ENCODE measurements at regions of chr16 and their contacts with region 1.

Region 1: GRCh38 chr16:11105038-11105903 is 150.7 kb downstream of the SOCS1 start:
- DNase-seq: peak; percentile 80 to 94 (median 85)
- ATAC-seq: peak; percentile 72
- H3K4me3 ChIP-seq: no peak overlapping the region
- H3K27ac ChIP-seq: peak overlapping the region; percentile 54
- H3K4me1 ChIP-seq: peaks cover 47 to 56% of the 10 kb centered on the region in 2 experiments
- H3K27me3 ChIP-seq: no peaks in the 10 kb centered on the region
- CTCF ChIP-seq: no peak
- EP300 ChIP-seq: peak; percentile 99
- POLR2A ChIP-seq: no peak
- RAD21 ChIP-seq: peak; percentile 31 to 45

Region 2: DNA sequence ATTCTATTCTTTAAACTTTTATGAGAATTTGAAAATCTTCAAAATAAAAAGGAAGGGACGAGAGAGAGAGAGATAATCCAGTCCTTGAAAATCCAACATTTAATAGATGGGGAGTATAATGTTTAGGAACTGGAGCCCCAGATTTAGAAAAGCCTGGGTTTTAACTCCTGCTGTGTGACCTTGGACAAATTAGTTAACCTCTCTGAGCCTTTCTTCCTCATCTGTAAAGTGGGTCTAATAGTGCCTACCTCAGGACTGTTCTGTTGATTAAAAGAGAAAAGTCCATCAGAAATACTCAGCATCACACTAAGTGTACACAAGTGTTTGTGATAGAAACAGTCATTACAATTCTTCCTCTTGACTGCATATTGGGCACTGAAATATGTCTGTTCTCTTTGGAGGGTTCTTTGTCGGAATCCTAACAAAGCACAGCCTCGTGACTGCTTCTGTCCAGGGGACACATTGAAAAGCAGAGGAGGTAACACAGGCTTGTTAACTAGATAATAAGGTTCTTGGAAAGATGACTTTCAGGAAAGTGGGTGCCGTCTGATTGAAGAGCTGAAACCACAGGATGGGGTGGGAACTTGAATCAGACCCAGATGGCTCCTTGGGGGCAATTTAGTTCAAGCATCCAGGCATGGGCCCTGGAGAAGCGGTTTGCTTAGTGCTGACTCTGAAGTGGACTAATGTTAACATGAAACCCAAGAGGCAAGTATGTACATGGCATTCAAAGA is 32.7 kb before region 1 on chr16:
- CTCF ChIA-PET with region 1: no interaction called
- POLR2A ChIA-PET with region 1: no interaction called
- in situ Hi-C with region 1: no loop called
- intact Hi-C with region 1: loop called (anchors 2 kb)
- DNase-seq: peak in 2 of 4 experiments; percentile 69 to 79
- ATAC-seq: peak; percentile 55
- H3K4me3 ChIP-seq: no peak overlapping the region
- H3K27ac ChIP-seq: no peak overlapping the region; the same call in 2 of the 3 replicates
- H3K4me1 ChIP-seq: peaks cover 14% of the 10 kb centered on the region in 2 experiments
- H3K27me3 ChIP-seq: no peaks in the 10 kb centered on the region
- CTCF ChIP-seq: no peak
- EP300 ChIP-seq: peak; percentile 67
- POLR2A ChIP-seq: no peak
- RAD21 ChIP-seq: no peak; a peak in 1 of 4 replicates

Region 3: DNA sequence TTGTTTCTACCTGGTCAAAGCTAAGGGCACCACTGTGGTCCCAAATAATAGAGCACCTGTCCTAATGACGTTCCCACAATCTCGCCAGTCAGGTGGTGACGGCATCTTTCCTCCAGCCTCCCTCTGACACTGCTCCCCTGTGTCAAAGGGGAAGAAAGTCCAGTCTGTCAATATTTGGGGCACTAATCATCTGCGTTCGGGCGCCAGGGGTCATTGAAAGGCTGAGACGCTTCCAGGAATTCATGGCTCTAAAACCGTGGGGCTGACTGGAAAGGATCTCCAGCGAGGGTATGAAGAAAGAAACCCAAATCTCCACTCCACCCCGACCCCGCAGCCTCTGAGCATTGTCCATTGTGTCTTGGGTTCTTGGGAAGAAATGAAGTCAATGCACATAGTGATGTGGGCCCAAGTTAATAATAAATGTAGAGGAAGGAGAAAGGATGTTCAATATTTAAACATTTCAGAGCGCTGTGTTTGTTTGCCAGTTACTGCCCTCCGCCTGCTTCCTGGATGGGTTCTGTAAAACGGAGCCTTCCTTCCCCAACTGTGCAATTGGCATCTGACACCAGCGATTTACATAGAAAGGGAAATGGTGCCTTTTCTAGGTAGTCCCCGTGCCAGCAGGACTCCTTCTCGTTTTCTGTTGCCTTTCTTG is 47.5 kb after region 1 on chr16:
- CTCF ChIA-PET with region 1: no interaction called
- POLR2A ChIA-PET with region 1: no interaction called
- in situ Hi-C with region 1: no loop called
- intact Hi-C with region 1: loop called (anchors 5 kb)
- DNase-seq: peak in 1 of 4 experiments; percentile 41
- ATAC-seq: no peak
- H3K4me3 ChIP-seq: no peak overlapping the region
- H3K27ac ChIP-seq: no peak overlapping the region
- H3K4me1 ChIP-seq: peaks cover 39 to 41% of the 10 kb centered on the region in 2 experiments
- H3K27me3 ChIP-seq: no peaks in the 10 kb centered on the region
- CTCF ChIP-seq: no peak
- EP300 ChIP-seq: no peak
- POLR2A ChIP-seq: no peak
- RAD21 ChIP-seq: no peak

Region 4: GRCh38 chr16:11240636-11241473 is 135.6 kb after region 1 on chr16:
- CTCF ChIA-PET with region 1: interaction called, 3 read pairs
- POLR2A ChIA-PET with region 1: no interaction called
- in situ Hi-C with region 1: no loop called
- intact Hi-C with region 1: loop called (anchors 2 kb)
- DNase-seq: peak in 1 of 4 experiments; percentile 59
- ATAC-seq: no peak
- H3K4me3 ChIP-seq: no peak overlapping the region
- H3K27ac ChIP-seq: 0 out of 3 replicates have a peak overlapping the region, but pooled peaks have one; percentile 2
- H3K4me1 ChIP-seq: peaks cover 33 to 34% of the 10 kb centered on the region in 2 experiments
- H3K27me3 ChIP-seq: no peaks in the 10 kb centered on the region
- CTCF ChIP-seq: no peak
- EP300 ChIP-seq: no peak
- POLR2A ChIP-seq: no peak
- RAD21 ChIP-seq: no peak

Measured in K562 (cell line).